ENCODE measurements at regions of chr22 and their contacts with region 1.

Region 1: DNA sequence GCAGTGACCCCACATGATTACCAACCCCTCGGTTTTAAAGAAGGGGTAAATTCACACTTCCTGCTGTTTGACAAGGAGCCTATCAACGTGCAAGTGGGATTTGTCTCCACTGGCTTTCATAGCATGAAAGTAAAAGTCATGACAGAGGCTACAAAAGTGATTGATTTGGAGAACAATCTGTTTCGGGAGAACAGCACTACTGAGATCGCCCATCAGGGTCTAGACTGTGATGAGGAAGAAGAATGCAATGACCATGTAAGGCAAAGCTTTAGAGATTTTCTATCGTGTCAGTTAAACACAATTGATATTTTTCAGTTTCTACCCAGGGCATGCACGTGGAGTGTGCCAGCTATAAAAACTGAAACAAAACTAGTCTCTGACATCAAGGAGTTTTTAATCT is 41.7 kb downstream of the HORMAD2 start:
- DNase-seq: peak; percentile 25
- H3K4me3 Mint-ChIP-seq: no peak overlapping the region
- H3K27ac Mint-ChIP-seq: no peak overlapping the region
- H3K4me1 Mint-ChIP-seq: peaks cover 32% of the 10 kb centered on the region
- H3K27me3 Mint-ChIP-seq: no peaks in the 10 kb centered on the region

Region 2: DNA sequence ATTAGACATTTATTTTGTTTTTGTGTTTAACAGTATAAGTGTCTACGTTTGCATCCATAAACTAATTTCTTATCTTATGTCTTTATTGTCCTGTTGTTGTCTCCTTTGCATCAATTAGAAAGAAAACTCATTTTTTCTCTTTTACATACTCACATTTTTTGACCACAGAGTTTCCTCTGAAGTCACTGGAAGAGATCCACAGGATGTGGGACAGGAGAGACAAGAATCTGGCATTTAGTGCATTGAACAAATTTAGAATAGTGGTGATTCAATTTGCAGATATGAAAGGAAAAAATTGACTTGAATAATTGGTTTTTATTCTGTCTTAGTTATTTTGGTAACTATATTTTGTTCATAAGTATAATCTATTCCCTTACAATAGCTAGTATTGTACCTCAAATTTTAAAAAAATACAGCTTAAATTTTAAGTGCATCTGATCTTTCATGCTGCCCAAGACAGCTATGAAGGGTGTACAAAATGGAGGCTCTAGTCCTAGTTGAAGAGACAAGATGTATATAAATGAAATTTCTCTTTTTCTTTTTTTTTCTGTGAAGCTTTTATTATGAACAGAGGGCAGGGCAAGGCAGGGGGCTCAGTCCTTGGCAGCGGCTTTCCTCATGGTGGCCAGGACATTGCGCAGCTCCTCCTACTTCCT is 17.3 kb before region 1 on chr22:
- CTCF ChIA-PET with region 1: interaction called, 30 read pairs
- intact Hi-C with region 1: no loop called
- DNase-seq: no peak
- H3K4me3 Mint-ChIP-seq: no peak overlapping the region
- H3K27ac Mint-ChIP-seq: peak overlapping the region; percentile 24
- H3K4me1 Mint-ChIP-seq: peaks cover 38% of the 10 kb centered on the region
- H3K27me3 Mint-ChIP-seq: no peaks in the 10 kb centered on the region

Measured in activated naive CD4-positive, alpha-beta T cell treated with anti-CD3 and anti-CD28 coated beads for 36 hours (primary cell).